Lower leg skin (tissue), 4 donors: ENCODE measurements at regions of chr10 and their contacts with region 1.

Region 1: GRCh38 chr10:96025566-96025965 is 17.8 kb upstream of the CCNJ start:
- DNase-seq: no peak
- H3K4me3 ChIP-seq: no peak overlapping the region
- CTCF ChIP-seq: no peak
- POLR2A ChIP-seq: no peak

Region 2: DNA sequence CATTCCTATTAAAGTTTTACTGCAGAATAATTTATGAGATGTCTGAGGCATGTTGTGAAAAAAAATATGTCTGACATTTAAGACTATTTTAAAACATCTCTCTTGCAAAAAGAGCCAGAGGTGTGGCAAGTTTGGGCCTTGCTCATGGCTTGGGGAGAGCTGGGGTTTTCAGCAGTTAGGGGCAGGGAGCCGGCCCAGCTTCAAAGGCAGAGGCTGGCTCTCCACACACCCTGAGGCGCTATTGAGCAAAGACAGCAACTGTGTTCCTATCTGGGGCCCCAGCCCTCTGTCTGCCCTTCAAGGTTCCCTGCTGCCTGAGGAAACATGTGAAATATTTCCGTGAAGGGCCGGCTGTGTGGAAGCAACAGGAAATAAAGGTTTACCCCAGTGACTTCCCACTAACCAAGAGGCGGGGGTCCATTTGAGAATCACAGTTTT is 558.4 kb before region 1 on chr10:
- intact Hi-C with region 1: no loop called
- DNase-seq: peak; percentile 72 to 93
- H3K4me3 ChIP-seq: no peak overlapping the region
- CTCF ChIP-seq: no peak
- POLR2A ChIP-seq: no peak

Region 3: DNA sequence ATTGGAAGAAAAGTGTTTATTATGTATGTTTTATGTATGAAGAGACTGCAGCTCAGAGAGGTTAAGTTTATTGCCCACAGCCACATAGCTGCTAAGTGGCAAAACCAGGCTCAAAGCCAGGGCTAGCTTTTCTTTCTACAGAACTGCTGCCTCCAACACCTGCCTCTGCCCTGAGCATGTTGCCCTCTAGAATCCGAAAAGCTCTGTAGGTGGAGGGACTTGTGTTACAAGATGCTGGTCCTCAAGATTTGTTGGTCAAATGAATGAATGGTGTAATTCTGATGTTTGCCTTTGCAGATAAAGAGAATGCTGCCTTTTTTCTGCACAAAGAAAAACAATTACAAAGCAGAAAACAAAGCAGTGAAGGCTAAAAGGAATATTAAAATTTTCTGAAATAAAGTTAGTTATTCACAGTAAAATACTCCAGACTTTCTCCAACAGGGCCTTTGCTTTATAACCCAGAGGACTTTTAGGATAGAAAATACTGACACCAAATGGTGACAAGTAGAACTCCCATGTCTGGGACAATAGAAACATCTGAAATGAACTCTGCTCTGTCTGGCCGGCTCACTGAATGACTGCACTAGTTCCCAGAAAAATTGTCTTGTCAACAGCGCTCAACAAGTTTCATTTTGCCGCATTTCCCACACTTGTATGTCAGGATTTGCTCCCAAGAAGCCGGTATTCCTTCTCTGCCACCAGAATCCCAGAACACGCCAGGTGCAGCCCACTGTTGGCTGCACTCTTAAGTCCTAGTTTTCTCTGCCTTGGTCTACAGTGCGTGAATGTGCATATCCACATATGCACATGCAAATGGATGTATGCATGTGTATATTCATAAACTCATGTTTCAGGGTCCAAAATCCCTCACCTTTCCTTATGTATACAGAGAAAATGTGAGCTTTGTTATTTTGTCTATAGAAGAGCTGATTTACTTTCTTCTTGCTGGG is 267.7 kb after region 1 on chr10:
- intact Hi-C with region 1: loop called (anchors 10 kb)
- DNase-seq: no peak
- H3K4me3 ChIP-seq: no peak overlapping the region
- CTCF ChIP-seq: peak in 1 of 3 donors; percentile 30
- POLR2A ChIP-seq: no peak